IMR-90 (cell line): ENCODE measurements at regions of chr5 and their contacts with region 1.

Region 1: GRCh38 chr5:144142139-144142823 is 28.2 kb downstream of the YIPF5 start:
- DNase-seq: peak; percentile 67
- ATAC-seq: peak; percentile 89
- H3K4me3 ChIP-seq: no peak overlapping the region
- H3K27ac ChIP-seq: no peak overlapping the region
- H3K4me1 ChIP-seq: peaks cover 7% of the 10 kb centered on the region
- H3K27me3 ChIP-seq: no peaks in the 10 kb centered on the region
- CTCF ChIP-seq: peak; percentile 76
- POLR2A ChIP-seq: no peak
- RAD21 ChIP-seq: peak; percentile 83

Region 2: GRCh38 chr5:143693651-143694252 is 448.5 kb before region 1 on chr5:
- CTCF ChIA-PET with region 1: no interaction called
- POLR2A ChIA-PET with region 1: no interaction called
- dilution Hi-C with region 1: no loop called
- in situ Hi-C with region 1: no loop called
- intact Hi-C with region 1: loop called (anchors 10 kb)
- DNase-seq: no peak
- ATAC-seq: no peak
- H3K4me3 ChIP-seq: no peak overlapping the region
- H3K27ac ChIP-seq: no peak overlapping the region
- H3K4me1 ChIP-seq: peaks cover 5% of the 10 kb centered on the region; the same call in 1 of the 2 replicates
- H3K27me3 ChIP-seq: no peaks in the 10 kb centered on the region
- CTCF ChIP-seq: no peak
- POLR2A ChIP-seq: no peak
- RAD21 ChIP-seq: no peak

Region 3: DNA sequence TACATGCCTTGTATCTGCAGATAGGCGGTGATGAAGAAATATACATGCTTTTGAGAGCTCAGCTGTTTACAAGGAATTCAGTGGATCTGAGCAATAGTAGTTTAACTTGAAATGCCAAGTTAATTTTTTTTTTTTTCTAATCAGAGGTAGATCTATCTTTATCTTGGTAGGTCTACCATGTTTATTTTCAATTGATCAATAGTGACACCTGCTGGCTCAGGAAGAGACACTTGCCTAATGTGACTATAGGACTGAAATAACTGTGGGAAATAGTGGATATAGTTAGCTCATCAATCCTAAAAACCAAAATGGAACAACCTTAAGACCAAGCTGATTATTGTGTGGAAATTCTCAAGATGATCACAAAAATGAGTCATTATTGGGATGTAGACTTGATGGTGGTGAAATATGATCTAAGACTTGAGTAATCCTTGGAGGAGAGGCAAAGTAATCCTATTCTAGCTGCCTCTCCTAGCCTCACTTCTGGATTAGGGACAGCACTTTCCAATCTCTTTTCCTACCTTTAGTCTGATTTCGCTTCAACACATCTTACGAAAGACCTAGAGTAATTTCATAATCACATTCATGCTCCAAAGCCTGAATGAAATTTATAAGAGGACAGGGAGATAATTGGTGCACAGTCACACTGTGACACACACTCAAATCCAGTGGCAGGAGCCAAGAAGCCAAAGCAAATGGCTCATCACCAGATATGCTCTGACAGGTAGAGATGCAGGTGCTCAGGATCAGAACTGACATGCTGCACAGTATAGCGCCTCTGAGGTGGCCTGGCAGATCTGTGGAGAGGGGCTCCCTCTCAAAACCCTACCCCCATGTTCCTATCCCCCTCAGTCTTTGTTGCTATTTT is 174.0 kb before region 1 on chr5:
- CTCF ChIA-PET with region 1: interaction called, 4 read pairs
- POLR2A ChIA-PET with region 1: no interaction called
- dilution Hi-C with region 1: no loop called
- in situ Hi-C with region 1: no loop called
- intact Hi-C with region 1: loop called (anchors 5 kb)
- DNase-seq: peak; percentile 78
- ATAC-seq: peak; percentile 66
- H3K4me3 ChIP-seq: no peak overlapping the region
- H3K27ac ChIP-seq: no peak overlapping the region
- H3K4me1 ChIP-seq: peaks cover 4% of the 10 kb centered on the region; the same call in 1 of the 2 replicates
- H3K27me3 ChIP-seq: no peaks in the 10 kb centered on the region
- CTCF ChIP-seq: peak; percentile 52
- POLR2A ChIP-seq: no peak
- RAD21 ChIP-seq: peak; percentile 58